AG04449 (cell line): ENCODE measurements at regions of chr12 and their contacts with region 1.

Region 1: DNA sequence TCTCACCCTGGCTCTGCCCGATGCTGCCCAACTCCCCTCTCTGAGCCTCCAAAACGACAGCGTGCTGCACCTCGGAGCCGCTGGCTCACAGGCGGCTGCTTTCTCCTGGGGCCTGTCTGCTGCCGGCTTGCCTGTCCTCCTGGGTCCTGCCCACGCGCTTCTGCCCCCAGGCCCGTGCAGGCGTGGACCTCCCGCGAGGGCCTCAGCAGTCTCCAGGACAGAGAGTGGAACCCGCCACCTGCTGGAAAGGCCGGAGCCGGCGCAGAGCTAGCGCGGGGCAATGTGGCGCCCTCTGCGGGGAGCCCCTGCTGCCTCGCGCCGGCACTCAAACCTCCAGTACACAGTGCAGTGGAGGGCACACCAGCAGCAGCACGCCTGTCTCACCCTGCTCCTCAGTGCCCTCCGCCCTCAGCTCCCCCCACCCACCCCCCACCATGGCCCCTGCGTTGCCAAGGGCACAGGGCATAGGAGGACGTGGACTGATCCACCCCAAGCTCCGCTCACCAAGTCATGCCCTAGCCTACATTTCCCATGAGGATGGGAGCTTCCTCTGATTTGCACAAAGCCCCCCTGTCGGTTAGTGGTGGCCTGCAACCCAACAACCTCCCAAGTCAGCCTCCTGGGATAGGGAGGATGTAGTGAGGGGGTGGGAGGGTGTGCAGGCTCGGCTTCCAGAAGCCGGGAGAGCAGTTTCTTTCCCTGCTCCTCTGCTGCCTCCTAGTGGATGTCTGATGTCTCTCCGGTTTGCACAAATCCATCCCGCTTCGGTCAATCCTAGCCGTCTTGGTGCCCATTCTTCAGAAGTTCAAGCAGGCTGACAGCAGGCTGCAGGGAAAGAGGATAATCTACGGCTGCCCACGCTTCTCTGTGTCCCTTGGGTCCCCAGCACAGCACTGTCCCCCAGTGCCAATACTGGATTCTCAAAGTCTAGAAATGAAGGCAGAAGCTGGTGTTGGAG is 25.2 kb downstream of the KRT8 start:
- DNase-seq: peak; percentile 40
- H3K4me3 ChIP-seq: peak overlapping the region; percentile 41
- CTCF ChIP-seq: peak; percentile 100

Region 2: GRCh38 chr12:50947933-50948626 is 1931.6 kb before region 1 on chr12:
- CTCF ChIA-PET with region 1: no interaction called
- POLR2A ChIA-PET with region 1: no interaction called
- DNase-seq: no peak
- H3K4me3 ChIP-seq: no peak overlapping the region
- CTCF ChIP-seq: no peak

Region 3: GRCh38 chr12:52023182-52023975 is 856.3 kb before region 1 on chr12:
- CTCF ChIA-PET with region 1: interaction called, 27 read pairs
- POLR2A ChIA-PET with region 1: no interaction called
- DNase-seq: no peak
- H3K4me3 ChIP-seq: peak overlapping the region; percentile 59
- CTCF ChIP-seq: peak; percentile 98

Region 4: DNA sequence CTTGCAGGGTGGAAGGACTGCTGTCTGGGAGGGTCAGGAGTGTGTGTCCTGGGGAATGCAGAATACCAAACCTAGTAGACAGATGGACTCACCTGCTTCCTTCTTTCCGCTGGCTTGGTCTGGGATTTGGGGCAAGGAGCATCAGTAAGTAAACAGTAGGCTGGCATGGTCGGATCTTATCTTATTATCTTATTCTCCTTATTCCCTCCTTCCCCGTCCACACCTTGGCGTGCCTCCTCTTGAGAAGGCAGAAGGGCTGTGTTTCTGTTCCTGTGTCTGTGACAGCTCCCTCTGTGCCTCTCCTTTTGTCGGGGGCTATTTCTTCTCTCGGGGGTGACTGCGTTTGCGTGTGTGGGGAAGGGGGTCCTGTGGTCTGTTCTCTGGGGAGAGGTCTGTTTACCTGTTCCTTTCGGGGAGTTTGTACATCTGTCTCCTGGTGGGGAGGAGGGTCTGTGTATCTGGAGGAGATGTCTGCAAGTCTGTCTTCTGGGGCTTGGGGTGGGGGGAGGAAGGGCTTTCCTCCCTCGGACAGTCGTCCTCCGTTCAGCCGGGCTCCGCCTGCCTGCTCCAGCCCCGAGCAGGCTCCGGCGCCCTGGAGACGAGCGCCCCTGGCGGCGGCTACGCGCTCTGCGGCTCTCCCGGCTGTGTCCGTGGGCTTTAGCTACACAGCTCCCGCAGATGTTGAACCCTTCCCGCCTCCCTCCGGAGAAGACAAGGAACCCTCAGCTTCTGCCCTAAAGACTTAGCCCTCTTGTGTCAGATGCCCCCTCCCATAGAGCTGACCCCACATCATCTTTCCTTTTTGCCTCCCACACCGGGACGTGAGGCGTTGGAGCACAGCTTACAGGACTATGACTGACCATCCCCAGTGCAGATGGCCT is 600.9 kb before region 1 on chr12:
- CTCF ChIA-PET with region 1: interaction called, 11 read pairs
- POLR2A ChIA-PET with region 1: no interaction called
- DNase-seq: no peak
- H3K4me3 ChIP-seq: peak overlapping the region; percentile 13; the same call in 1 of the 2 replicates
- CTCF ChIP-seq: peak; percentile 100

Region 5: GRCh38 chr12:52372216-52373154 is 507.2 kb before region 1 on chr12:
- CTCF ChIA-PET with region 1: interaction called, 488 read pairs
- POLR2A ChIA-PET with region 1: no interaction called
- DNase-seq: peak; percentile 61
- H3K4me3 ChIP-seq: no peak overlapping the region
- CTCF ChIP-seq: peak; percentile 92

Region 6: GRCh38 chr12:52667511-52667910 is 212.2 kb before region 1 on chr12:
- CTCF ChIA-PET with region 1: interaction called, 16 read pairs
- POLR2A ChIA-PET with region 1: no interaction called
- DNase-seq: no peak
- H3K4me3 ChIP-seq: no peak overlapping the region
- CTCF ChIP-seq: peak; percentile 10

Region 7: DNA sequence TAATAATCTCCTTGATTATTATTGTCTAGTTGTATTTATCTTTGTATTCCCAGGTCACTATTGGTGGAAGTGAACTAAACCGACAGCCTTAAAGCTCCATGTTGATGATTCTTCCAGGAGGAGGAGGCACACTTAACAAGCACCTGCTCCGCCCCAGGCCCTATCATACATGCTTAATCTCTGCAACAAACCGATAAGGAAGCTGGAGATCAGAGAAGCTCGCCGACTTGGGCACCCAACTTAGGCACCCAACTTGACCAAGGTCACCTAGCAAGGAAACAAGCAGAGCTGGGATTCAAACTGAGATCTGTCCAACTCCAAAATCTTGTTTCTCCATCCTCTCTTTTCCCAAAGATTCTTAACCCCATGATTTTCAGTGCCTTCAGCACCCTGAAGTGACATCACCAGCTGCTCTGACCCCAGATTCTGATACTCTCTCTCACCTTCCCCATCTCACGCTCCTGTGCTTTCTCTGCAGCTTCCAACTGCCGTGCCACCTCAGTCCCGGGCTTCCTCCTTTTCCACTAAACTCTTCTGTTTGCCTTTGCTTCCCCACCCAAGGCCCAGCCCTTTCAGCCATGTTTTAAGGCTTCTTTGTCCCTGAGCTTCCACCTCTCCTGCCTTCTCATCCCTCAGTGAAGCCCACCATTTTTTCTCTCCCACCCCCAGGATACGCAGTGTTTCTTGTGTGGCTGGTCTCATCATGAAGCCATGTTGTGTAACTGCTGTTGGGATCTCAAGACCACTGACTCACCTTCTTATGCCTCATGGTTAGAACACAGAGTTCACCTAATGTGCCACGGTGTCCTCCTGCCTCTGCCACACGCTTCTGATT is 62.6 kb after region 1 on chr12:
- CTCF ChIA-PET with region 1: interaction called, 71 read pairs
- POLR2A ChIA-PET with region 1: no interaction called
- DNase-seq: no peak
- H3K4me3 ChIP-seq: no peak overlapping the region
- CTCF ChIP-seq: no peak